Sigmoid colon (tissue), 7 donors: ENCODE measurements at regions of chr17 and their contacts with region 1.

Region 1: GRCh38 chr17:82716203-82717010 is at the start of gene FN3KRP:
- DNase-seq: peak; percentile 98
- H3K4me3 ChIP-seq: peak within 1 kb of the TSS; percentile 58 to 85 (median 76)
- H3K27ac ChIP-seq: peak within 1 kb of the TSS; percentile 76 to 79 (median 78)
- H3K4me1 ChIP-seq: peaks cover 0 to 24% (median 20%) of the 10 kb centered on the region in 4 donors
- H3K27me3 ChIP-seq: no peaks in the 10 kb centered on the region
- CTCF ChIP-seq: no peak
- EP300 ChIP-seq: no peak
- POLR2A ChIP-seq: peak in 1 of 2 donors; percentile 59
- total RNA-seq, gene FN3KRP: 8.1 to 18.0 (median 13.1) TPM

Region 2: DNA sequence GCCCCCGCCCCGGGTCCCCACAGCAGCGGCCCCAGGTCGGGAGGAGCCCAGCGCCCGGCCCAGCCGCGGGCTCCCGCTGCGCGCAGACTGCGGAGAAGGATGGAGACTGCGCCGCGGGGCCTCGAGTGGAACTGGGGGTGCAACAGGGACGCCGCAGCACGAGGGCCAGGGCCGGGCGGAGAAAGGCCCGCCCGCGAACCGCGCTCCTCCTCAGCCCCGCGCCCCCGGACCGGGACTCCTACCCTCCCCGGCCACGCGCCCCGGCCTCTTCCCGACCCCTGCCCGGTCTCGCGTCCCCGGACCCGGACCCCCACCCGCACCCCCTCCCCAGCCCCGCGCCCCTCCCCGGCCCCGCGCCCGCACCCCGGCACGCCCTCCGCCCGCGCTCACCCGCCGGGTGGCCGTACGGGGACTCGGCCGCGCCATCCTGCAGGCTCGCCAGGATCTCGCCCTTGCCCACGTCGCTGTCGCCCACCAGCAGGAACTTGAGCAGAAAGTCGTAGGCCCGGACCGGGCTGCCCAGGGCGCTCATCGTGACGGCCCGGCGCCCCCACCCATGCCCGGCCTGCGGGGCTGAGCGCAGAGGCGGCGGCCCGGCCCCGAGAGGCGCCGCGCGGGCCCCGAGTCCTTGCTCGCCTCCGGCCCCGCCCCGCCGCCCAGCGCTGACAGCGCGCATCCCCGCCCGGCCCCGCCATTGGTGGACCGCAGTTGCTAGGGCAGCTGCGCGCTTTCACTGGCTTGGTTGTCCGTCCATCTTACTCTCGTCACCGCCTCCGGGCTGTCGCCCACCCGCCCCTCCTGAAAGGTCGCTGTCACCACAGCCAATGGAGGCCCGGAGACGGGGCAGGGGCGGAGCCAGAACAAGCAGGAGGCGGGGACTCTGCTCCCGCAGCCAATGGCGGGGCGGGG is 18.1 kb before region 1 on chr17 and contains the start of gene RAB40B:
- intact Hi-C with region 1: loop called (anchors 1 kb)
- DNase-seq: peak; percentile 100
- H3K4me3 ChIP-seq: peak within 1 kb of the TSS; percentile 66 to 89 (median 76)
- H3K27ac ChIP-seq: peak within 1 kb of the TSS; percentile 71 to 75 (median 74)
- H3K4me1 ChIP-seq: peaks cover 0 to 23% (median 17%) of the 10 kb centered on the region in 4 donors
- H3K27me3 ChIP-seq: no peaks in the 10 kb centered on the region
- CTCF ChIP-seq: no peak
- EP300 ChIP-seq: no peak
- POLR2A ChIP-seq: no peak
- total RNA-seq, gene RAB40B: 11.7 to 32.7 (median 21.6) TPM

Region 3: GRCh38 chr17:82751571-82752370 is 35.4 kb after region 1 on chr17 and contains the start of gene TBCD:
- intact Hi-C with region 1: loop called (anchors 1 kb)
- DNase-seq: peak; percentile 95
- H3K4me3 ChIP-seq: peak within 1 kb of the TSS; percentile 69 to 97 (median 88)
- H3K27ac ChIP-seq: peak within 1 kb of the TSS; percentile 80 to 92 (median 90)
- H3K4me1 ChIP-seq: peaks cover 0 to 27% (median 21%) of the 10 kb centered on the region in 4 donors
- H3K27me3 ChIP-seq: no peaks in the 10 kb centered on the region
- CTCF ChIP-seq: no peak
- EP300 ChIP-seq: peak in 1 of 4 donors; percentile 46
- POLR2A ChIP-seq: peak in 1 of 2 donors; percentile 12
- total RNA-seq, gene TBCD: 25.3 to 69.0 (median 34.4) TPM